MCF 10A (cell line): ENCODE measurements at regions of chr7 and their contacts with region 1.

Region 1: GRCh38 chr7:105759670-105760550 is 116.5 kb downstream of the ATXN7L1 start:
- DNase-seq: peak; percentile 61
- H3K4me3 Mint-ChIP-seq: no peak overlapping the region
- H3K27ac Mint-ChIP-seq: no peak overlapping the region
- H3K4me1 Mint-ChIP-seq: no peaks in the 10 kb centered on the region
- H3K27me3 Mint-ChIP-seq: no peaks in the 10 kb centered on the region
- CTCF ChIP-seq: peak; percentile 62

Region 2: DNA sequence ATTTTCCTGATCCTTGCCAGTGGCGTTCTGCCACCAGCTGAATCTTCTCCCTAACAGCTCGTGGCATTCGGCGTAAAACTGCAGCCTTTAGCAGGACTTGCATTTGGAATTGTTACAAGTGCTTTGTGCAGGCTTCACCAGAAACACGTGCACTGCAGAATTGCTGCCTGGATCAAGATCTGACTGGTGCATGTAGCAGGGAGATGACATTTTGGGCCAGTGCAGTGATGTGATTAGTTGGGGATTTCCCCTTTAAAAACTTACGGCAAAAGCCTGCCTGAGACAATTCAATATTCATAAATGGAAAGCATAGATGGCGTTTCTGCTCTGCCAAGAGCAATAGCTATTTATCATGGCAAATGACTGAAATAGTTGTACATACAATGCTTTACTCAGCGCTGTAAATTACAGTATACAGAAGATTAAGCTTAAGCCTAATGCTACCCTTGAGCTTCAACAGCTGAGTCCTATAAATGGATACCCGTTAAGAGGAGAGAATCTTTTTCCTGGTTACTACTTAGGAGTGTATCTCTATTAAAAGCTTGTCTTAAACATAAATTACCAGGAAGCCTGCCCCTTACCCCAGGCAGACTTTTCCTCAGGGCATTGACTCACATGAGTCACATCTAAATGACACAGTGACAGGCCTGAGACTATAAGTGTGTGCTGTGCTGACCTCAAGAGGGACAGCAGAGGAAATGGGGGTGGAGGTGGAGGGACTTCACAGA is 10.2 kb after region 1 on chr7:
- CTCF ChIA-PET with region 1: interaction called, 25 read pairs
- POLR2A ChIA-PET with region 1: interaction called, 4 read pairs
- intact Hi-C with region 1: no loop called
- DNase-seq: no peak
- H3K4me3 Mint-ChIP-seq: no peak overlapping the region
- H3K27ac Mint-ChIP-seq: no peak overlapping the region
- H3K4me1 Mint-ChIP-seq: no peaks in the 10 kb centered on the region
- H3K27me3 Mint-ChIP-seq: no peaks in the 10 kb centered on the region
- CTCF ChIP-seq: no peak

Region 3: DNA sequence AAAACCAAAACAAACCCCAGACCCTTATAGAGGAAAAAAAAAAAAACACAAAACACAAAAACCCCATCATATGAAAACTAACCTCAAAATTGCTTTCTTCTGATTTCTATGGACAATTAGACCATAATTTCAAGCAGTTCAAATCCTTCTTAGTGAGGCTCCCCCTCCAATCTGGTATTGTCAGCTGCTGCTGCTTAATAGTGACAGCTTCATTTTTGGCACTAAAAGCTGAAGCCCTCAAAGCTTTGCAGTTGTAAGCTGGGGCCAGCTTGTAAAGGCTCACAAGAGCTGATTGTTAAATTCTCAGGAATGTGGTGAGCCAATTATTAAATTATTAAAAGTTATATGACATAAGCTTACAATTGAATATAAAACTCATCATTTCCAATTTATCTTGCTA is 94.6 kb after region 1 on chr7:
- CTCF ChIA-PET with region 1: interaction called, 11 read pairs
- POLR2A ChIA-PET with region 1: no interaction called
- intact Hi-C with region 1: no loop called
- DNase-seq: no peak
- H3K4me3 Mint-ChIP-seq: no peak overlapping the region
- H3K27ac Mint-ChIP-seq: no peak overlapping the region
- H3K4me1 Mint-ChIP-seq: no peaks in the 10 kb centered on the region
- H3K27me3 Mint-ChIP-seq: no peaks in the 10 kb centered on the region
- CTCF ChIP-seq: no peak

Region 4: DNA sequence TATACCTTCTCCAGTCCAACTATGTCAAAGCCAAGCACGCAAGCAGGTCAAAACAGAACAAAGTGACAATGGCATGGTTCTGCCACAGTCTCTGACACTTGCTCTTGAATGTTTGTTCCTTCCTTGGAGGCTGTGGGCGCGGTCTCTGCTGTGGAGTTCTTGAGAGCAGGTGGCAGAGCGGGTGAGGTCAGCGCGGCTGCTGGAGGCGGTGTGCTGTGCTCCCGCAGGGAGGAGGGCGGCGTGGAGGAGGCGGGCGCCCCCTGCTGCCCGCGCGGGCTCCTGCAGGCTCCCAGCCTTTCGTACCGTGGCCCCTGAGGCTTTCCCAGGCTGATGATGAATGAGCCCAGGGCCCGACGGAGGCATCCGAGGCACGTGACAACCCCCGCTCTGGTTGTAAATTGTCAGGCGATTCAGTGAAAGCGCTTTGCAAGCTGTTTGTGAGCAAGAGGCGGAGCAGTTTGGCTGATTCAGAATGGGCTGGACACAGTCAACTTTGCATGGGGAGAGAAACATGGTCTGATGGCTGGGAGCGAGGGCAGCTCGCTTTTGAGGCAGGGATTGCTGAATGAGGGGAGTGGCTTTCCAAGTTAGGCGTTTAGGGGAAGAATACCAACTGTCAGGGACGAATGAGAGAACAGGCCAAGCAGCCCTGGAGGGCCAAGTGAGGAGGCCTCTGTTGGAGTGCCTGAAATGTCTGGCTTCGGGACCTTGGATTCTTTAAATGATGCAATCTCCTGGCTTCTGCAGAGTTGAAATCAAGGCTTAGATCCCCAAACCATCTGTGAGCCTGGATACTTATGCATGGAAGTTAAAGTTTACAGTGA is 249.7 kb after region 1 on chr7:
- CTCF ChIA-PET with region 1: interaction called, 46 read pairs
- POLR2A ChIA-PET with region 1: interaction called, 4 read pairs
- intact Hi-C with region 1: loop called (anchors 1 kb)
- DNase-seq: peak; percentile 89
- H3K4me3 Mint-ChIP-seq: peak overlapping the region; percentile 32
- H3K27ac Mint-ChIP-seq: no peak overlapping the region
- H3K4me1 Mint-ChIP-seq: peaks cover 14% of the 10 kb centered on the region
- H3K27me3 Mint-ChIP-seq: no peaks in the 10 kb centered on the region
- CTCF ChIP-seq: peak; percentile 96

Region 5: DNA sequence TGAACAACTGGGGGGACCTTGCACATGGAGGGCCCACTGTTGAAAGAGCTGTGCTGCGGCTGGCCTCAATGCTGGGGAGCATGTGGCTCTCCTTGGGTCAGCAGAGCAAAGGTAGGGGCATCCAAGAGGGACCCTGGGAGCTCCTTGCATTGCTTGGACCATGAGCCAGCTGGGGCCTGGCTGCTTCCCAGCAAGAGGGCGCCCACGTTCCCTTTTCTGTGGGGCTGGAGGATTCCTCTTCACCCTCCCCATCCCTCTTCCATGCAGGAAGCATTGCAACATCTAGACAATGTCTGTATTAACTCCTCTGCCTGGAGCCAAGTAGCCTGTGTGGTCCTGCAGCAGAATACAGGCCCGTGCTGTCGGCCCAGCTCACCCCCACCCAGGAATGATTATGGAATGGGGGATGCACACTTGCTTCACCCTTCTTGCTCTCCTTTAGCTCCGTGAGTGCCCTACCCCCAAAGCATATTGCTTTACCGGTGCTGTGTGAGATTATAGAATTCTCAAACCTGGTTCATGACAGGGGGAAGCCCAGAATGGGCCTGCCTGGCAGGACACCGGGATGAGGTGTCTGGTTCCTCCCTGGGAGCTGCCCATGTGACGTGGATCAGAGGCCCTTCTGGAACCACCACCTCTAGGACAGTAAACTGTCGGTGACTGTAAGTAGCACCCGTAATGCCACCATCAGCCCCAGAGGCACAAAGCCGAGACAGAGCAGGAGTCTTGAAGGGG is 290.3 kb after region 1 on chr7:
- CTCF ChIA-PET with region 1: interaction called, 138 read pairs
- POLR2A ChIA-PET with region 1: interaction called, 3 read pairs
- intact Hi-C with region 1: no loop called
- DNase-seq: peak; percentile 85
- H3K4me3 Mint-ChIP-seq: no peak overlapping the region
- H3K27ac Mint-ChIP-seq: no peak overlapping the region
- H3K4me1 Mint-ChIP-seq: peaks cover 20% of the 10 kb centered on the region
- H3K27me3 Mint-ChIP-seq: peaks cover 15% of the 10 kb centered on the region
- CTCF ChIP-seq: no peak